ENCODE measurements at regions of chr11 and their contacts with region 1.

Region 1: DNA sequence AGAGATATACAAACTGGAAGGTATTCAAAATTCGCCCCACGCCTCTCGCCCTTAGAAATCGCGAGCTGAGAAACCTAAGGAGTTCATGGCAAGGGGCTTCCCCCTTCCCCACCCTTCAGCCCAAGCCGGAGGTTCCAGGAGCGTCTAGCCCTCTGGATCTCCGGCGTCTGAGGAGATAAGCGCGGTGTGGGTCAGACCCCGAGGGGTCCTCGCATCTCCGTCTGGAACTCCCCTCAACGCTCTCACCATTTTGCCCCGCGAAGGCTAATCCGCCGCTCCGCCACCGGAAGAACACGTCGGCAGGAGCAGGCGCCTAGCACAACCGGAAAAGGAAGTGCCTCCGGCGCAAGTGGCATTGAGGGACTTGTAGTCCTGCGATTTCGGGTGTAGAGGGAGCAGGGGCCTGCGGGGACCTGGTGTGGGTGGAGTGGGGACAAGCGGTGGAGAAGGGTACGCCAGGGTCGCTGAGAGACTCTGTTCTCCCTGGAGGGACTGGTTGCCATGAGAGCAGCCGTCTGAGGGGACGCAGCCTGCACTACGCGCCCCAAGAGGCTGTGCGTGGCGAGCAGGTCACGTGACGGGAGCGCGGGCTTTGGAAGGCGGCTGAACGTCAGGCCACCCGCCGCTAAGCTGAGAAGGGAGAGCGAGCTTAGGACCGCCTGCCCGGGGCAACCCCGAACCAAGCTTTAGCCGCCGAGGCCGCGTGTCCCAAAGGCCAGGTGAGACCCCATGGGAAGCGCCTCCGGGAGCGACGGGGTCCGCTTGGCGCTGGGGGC is at the starts of genes FEN1 and TMEM258:
- DNase-seq: peak; percentile 89 to 92 (median 91)
- ATAC-seq: peak; percentile 86 to 92 (median 91)
- H3K4me3 ChIP-seq: peak within 1 kb of the TSS; percentile 67 to 97 (median 76)
- H3K27ac ChIP-seq: peak within 1 kb of the TSS; percentile 97 to 98 (median 98)
- H3K4me1 ChIP-seq: peaks cover 0 to 16% (median 3%) of the 10 kb centered on the region in 4 donors
- H3K27me3 ChIP-seq: no peaks in the 10 kb centered on the region
- CTCF ChIP-seq: peak in 1 of 4 donors; percentile 16
- POLR2A ChIP-seq: peak; percentile 64
- total RNA-seq, gene FEN1: 4.0 to 13.3 (median 5.4) TPM
- total RNA-seq, gene TMEM258: 31.6 to 74.5 (median 55.3) TPM

Region 2: DNA sequence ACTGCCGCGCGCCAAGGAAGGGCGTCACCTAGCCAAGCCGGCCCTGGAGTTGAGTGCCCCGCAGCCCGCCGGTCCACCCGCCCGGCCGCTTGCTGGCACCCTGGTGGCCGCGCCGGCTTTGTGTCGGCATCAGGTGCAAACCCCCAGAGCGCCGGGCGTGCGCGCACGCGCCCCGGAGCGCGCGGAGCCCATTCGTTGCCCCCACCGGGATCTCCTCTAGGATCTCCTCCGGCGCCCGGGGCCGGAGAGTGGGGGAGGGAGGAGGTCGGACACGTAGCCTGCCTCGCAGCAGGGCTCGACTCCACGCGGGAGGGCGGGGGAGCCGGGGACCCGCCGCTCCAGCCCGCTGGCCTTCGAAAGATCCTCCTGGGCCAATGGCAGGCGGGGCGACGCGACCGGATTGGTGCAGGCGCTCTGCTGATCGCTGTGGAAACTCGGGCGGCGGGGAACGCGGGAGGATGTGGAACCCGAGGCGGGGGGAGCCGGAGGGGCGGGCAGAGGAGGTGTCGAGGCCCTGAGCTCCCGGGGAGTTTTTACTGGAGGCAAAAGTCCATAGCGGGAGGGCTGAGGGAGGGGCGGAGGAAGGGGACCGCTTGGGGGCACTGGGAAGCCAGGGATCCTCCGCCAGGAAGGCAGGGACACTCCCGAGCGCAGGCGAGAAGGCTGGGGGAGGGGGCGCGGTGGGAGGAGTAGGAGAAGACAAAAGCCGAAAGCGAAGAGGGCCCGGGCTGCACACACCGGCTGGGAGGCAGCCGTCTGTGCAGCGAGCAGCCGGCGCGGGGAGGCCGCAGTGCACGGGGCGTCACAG is 35.3 kb after region 1 on chr11 and contains the start of gene FADS2:
- intact Hi-C with region 1: no loop called
- DNase-seq: peak; percentile 86 to 96 (median 91)
- ATAC-seq: peak; percentile 78 to 86 (median 82)
- H3K4me3 ChIP-seq: peak within 1 kb of the TSS; percentile 56 to 62 (median 57)
- H3K27ac ChIP-seq: peak within 1 kb of the TSS; percentile 55 to 88 (median 64)
- H3K4me1 ChIP-seq: peaks cover 0 to 20% (median 9%) of the 10 kb centered on the region in 4 donors
- H3K27me3 ChIP-seq: no peaks in the 10 kb centered on the region
- CTCF ChIP-seq: no peak
- POLR2A ChIP-seq: no peak
- total RNA-seq, gene FADS2: 4.2 to 166 (median 110) TPM

Region 3: DNA sequence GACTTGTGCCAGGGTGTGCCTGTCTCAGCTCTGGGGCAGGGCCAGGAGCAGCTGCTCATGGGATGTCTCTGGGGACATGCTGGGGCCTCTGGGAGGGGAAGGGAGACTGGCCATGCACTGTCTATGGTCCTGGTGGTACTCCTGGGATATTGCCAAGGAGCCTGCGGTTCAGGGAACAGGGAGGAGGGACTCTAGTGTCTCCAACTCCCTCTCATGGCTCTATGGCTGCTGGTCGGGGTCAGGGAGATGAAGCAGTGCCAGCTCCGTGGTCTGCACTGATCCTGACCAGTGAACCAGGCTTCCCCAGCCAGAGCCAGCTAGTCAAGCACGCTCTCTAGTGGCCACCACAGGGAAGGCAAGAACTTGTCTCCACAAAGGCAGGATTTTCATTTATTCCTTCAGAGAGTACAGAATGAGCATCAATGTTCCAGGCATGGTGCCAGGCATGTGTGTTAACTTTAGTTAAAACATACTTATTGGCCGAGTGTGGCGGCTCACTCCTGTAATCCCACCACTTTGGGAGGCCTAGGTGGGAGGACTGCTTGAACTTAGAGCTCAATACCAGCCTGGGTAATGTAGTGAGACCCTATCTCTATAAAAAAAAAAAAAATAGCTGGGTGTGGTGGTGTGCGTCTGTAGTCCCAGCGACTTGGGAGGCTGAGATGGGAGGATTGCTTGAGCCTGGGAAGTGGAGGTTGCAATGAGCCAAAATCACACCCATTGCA is 155.2 kb after region 1 on chr11:
- intact Hi-C with region 1: loop called in 1 of 2 experiments (anchors 10 kb)
- DNase-seq: peak; percentile 83 to 84 (median 83)
- ATAC-seq: peak; percentile 93 to 97 (median 94)
- H3K4me3 ChIP-seq: no peak overlapping the region
- H3K27ac ChIP-seq: no peak overlapping the region
- H3K4me1 ChIP-seq: peaks cover 0 to 4% (median 0%) of the 10 kb centered on the region in 4 donors
- H3K27me3 ChIP-seq: no peaks in the 10 kb centered on the region
- CTCF ChIP-seq: peak; percentile 89 to 95 (median 91)
- POLR2A ChIP-seq: no peak

Region 4: GRCh38 chr11:61971248-61972111 is 179.0 kb after region 1 on chr11:
- intact Hi-C with region 1: no loop called
- DNase-seq: peak; percentile 95 to 98 (median 98)
- ATAC-seq: peak; percentile 42 to 60 (median 52)
- H3K4me3 ChIP-seq: peak overlapping the region in 2 of 3 donors; percentile 12 to 29
- H3K27ac ChIP-seq: peak overlapping the region; percentile 86 to 94 (median 89)
- H3K4me1 ChIP-seq: peaks cover 0 to 70% (median 29%) of the 10 kb centered on the region in 4 donors
- H3K27me3 ChIP-seq: no peaks in the 10 kb centered on the region
- CTCF ChIP-seq: no peak
- POLR2A ChIP-seq: peak; percentile 70

Region 5: DNA sequence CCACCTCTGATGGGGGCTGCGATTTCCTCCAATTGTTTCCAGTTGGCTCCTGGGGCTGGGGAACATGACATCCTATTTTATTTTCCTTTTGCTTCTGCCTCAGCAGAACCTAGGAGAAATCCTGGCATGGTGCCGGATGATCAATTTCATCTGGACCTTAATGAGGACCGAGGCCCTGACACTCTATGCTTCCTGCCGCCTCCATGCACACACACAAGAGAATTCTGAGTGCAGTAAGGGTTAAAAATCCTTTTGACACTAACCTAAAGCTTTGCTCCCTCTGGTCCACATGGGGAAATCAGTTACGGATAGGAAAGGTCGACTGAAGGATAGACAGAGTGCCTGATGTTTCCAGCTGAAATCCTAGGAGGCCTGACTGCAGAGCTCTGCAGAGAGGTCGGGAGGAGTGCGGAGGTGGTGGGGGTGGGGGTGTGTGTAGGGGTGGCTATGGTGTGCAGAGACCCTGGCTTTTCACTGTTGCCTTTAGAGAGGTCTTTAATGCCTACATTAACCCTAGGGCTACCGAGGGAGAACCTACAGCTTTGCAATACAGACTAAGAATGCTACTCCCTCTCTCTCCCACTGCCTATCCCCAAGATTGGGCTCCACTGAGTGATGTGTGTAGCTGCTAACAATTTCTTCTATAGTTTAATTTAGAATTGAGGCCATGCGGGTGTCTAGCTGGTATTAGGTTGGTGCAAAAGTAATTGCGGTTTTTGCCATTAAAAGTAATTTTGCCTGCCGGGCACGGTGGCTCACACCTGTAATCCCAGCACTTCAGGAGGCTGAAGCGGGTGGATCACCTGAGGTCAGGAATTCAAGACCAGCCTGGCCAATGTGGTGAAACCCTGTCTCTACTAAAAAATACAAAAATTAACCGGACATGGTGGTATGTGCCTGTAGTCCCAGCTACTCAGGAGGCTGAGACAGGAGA is 277.8 kb after region 1 on chr11:
- intact Hi-C with region 1: loop called in 1 of 2 experiments (anchors 10 kb)
- DNase-seq: no peak
- ATAC-seq: no peak
- H3K4me3 ChIP-seq: no peak overlapping the region
- H3K27ac ChIP-seq: no peak overlapping the region
- H3K4me1 ChIP-seq: no peaks in the 10 kb centered on the region
- H3K27me3 ChIP-seq: no peaks in the 10 kb centered on the region
- CTCF ChIP-seq: no peak
- POLR2A ChIP-seq: no peak